Prostate gland (tissue), 2 donors: ENCODE measurements at regions of chr2 and their contacts with region 1.

Region 1: GRCh38 chr2:135531231-135532228 is at the start of gene R3HDM1:
- DNase-seq: peak; percentile 100
- H3K4me3 ChIP-seq: peak within 1 kb of the TSS; percentile 64 to 90
- H3K27ac ChIP-seq: peak within 1 kb of the TSS; percentile 88 to 92
- H3K4me1 ChIP-seq: no peaks in the 10 kb centered on the region
- H3K27me3 ChIP-seq: no peaks in the 10 kb centered on the region
- CTCF ChIP-seq: peak in 1 of 4 experiments; percentile 5
- POLR2A ChIP-seq: peak; percentile 29
- total RNA-seq, gene R3HDM1: 9.3 to 51.5 TPM

Region 2: DNA sequence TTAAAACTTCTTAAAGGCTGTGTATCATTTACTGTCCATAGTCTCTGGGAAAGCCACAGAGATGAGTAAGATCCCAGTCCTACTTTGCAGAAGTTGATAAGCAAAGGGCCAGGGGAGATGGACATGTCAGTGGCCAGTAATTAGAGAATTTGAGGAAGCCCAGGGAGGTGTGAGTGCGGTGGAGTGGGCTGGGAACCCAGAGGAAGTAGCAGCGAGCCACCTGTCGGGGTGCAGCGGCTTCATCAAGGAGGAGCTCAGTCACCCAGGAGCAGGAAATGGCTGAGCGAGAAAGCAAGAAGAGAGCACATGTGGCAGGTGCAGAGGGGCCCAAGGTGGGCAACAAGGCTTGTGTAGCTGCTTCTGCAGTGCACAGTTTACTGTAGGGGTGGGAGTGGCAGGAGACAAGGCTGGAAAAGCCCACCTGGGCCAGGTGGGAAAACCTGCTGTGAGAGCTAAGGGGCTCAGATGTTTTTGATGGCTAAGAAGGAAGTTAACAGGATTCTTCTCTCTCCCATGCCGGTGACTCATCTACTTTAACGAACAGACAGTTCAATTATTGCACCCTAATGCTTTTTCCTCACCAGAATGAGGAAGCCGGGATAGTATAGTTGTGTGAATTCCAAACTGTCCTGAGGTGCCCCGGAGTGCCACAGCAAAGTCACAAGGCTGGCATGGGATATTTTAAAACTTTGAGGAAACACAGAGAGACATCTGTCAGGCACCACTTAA is 1312.4 kb before region 1 on chr2:
- intact Hi-C with region 1: no loop called
- DNase-seq: no peak
- H3K4me3 ChIP-seq: no peak overlapping the region
- H3K27ac ChIP-seq: no peak overlapping the region
- H3K4me1 ChIP-seq: no peaks in the 10 kb centered on the region
- H3K27me3 ChIP-seq: no peaks in the 10 kb centered on the region
- CTCF ChIP-seq: no peak
- POLR2A ChIP-seq: no peak

Region 3: DNA sequence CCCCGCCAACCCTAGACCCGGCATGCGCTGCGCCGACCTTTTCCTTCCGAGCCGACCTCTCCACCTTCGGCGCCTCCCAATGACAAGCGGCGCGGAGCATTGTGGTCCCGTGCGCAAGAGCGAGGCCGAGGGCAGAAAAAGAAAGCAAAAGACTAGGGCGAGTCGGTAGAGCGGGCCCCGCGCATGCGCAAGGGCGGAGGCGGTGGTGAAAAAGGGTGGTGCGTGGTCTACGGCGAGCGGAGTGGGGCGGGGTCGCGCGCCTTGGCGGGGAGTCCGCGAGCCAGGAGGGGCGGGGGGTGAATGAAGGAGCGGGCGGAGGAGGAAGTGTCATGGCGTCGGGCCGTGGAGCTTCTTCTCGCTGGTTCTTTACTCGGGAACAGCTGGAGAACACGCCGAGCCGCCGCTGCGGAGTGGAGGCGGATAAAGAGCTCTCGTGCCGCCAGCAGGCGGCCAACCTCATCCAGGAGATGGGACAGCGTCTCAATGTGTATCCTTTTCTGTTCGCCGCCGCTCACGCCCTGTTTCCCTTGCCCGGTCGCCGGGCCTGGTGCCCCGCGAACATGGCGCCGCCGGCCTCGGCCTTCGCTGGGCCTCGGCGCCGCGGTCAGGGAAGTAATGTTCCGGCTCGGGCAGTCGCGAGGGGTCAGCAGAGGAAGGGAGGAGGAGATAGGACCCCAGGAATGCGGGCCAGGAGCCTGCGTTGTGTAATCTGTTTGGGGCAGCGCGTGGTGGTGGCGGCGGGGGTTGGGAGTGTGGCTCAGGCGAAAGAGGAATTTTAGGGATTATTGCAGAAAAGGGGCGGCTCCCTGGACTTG is 612.8 kb before region 1 on chr2 and contains the start of gene CCNT2:
- intact Hi-C with region 1: loop called (anchors 10 kb)
- DNase-seq: peak; percentile 97
- H3K4me3 ChIP-seq: peak within 1 kb of the TSS; percentile 90 to 95
- H3K27ac ChIP-seq: peak within 1 kb of the TSS; percentile 97
- H3K4me1 ChIP-seq: peaks cover 12% of the 10 kb centered on the region
- H3K27me3 ChIP-seq: no peaks in the 10 kb centered on the region
- CTCF ChIP-seq: peak in 1 of 4 experiments; percentile 19
- POLR2A ChIP-seq: peak; percentile 55
- total RNA-seq, gene CCNT2: 24.1 to 34.8 TPM

Region 4: GRCh38 chr2:135052042-135052876 is 479.3 kb before region 1 on chr2 and contains the start of gene RAB3GAP1:
- intact Hi-C with region 1: loop called (anchors 5 kb)
- DNase-seq: peak; percentile 69
- H3K4me3 ChIP-seq: peak within 1 kb of the TSS; percentile 54 to 80
- H3K27ac ChIP-seq: peak within 1 kb of the TSS; percentile 92
- H3K4me1 ChIP-seq: no peaks in the 10 kb centered on the region
- H3K27me3 ChIP-seq: no peaks in the 10 kb centered on the region
- CTCF ChIP-seq: no peak
- POLR2A ChIP-seq: peak; percentile 40
- total RNA-seq, gene RAB3GAP1: 43.4 to 54.6 TPM

Region 5: DNA sequence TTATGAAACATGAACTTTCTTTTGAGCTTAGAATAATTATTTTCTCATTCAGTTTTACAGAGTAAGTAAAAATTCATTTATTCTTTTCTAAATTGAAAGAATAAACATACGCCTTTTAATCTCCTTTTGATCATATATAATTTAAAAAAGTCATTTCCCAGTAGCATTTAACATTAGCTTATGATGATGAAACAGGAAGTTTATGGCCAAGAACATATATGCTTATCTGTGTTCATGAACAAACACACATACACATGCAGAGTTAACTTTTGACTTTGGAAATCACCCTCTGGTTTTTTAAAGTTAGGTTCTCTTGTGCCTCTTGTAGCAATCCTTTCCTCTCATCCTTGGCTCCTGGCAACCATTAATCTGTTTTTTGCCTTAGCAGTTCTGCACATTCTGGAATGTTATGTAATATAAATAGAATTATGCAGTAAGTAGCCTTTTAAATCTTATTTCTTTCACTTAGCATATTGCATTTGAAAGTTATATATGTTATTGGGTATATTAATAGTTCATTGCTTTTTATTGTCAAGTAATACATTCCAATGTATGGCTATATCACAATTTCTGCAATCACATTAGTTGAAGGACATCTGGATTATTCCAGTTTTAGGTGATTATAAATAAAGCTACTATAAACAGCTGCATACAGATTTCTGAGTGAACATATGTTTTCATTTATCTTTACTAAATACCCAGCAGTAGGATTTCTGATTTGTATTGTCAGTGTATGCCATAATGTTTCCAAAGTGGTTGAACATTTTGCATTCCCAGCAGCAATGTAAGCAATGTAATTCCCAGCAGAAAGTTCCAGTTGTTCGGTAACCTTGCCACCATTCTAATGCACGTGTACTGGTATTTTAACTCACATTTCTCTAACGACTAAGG is 210.8 kb before region 1 on chr2:
- intact Hi-C with region 1: no loop called
- DNase-seq: no peak
- H3K4me3 ChIP-seq: no peak overlapping the region
- H3K27ac ChIP-seq: no peak overlapping the region
- H3K4me1 ChIP-seq: no peaks in the 10 kb centered on the region
- H3K27me3 ChIP-seq: no peaks in the 10 kb centered on the region
- CTCF ChIP-seq: no peak
- POLR2A ChIP-seq: no peak

Region 6: GRCh38 chr2:135741395-135742324 is 210.1 kb after region 1 on chr2 and contains the start of gene UBXN4:
- intact Hi-C with region 1: loop called (anchors 2 kb)
- DNase-seq: peak; percentile 98
- H3K4me3 ChIP-seq: peak within 1 kb of the TSS; percentile 85 to 86
- H3K27ac ChIP-seq: peak within 1 kb of the TSS; percentile 98 to 100
- H3K4me1 ChIP-seq: no peaks in the 10 kb centered on the region
- H3K27me3 ChIP-seq: no peaks in the 10 kb centered on the region
- CTCF ChIP-seq: peak in 1 of 4 experiments; percentile 33
- POLR2A ChIP-seq: peak; percentile 98
- total RNA-seq, gene UBXN4: 67.8 to 74.3 TPM